Pancreas (tissue), 10 donors: ENCODE measurements at regions of chr2 and their contacts with region 1.

Region 1: DNA sequence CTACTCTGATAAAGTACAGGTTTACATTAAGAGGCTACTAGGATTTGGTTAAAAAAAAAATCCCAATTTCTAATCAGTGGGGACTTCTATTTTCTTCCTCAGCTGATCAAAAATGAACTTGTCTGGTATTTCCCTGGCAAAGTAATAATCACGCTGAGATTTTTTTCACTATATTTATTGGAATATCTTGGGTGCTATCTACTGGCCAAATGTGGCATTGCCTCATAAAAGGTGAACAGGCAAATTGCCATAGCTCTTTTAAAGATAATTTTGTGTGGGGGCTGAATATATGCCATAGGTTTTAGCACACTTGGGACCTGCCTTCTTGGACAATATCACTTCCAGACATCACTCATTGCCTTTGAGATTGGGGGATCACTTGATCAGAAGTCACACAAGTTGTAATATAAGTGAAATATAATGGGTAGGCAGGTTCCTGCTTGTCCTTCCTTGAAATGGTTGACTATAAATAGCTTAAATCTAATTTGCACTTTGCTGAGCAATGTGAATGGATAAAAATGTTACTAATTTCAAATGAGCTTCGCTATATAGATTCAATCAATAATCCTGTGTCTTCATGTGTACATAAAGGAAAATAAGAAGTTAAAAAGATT is 7.0 kb upstream of the NXPH2 start:
- DNase-seq: peak in 1 of 6 donors; percentile 34
- ATAC-seq: peak in 3 of 4 donors; percentile 71 to 85 (median 81)
- H3K4me3 ChIP-seq: no peak overlapping the region
- H3K27ac ChIP-seq: no peak overlapping the region
- H3K4me1 ChIP-seq: no peaks in the 10 kb centered on the region
- H3K27me3 ChIP-seq: no peaks in the 10 kb centered on the region
- CTCF ChIP-seq: peak; percentile 20 to 65 (median 43)

Region 2: GRCh38 chr2:137900421-137901141 is 886.6 kb before region 1 on chr2:
- intact Hi-C with region 1: loop called in 1 of 3 experiments (anchors 10 kb)
- DNase-seq: no peak
- ATAC-seq: no peak
- H3K4me3 ChIP-seq: no peak overlapping the region
- H3K27ac ChIP-seq: no peak overlapping the region
- H3K4me1 ChIP-seq: no peaks in the 10 kb centered on the region
- H3K27me3 ChIP-seq: no peaks in the 10 kb centered on the region
- CTCF ChIP-seq: no peak

Region 3: DNA sequence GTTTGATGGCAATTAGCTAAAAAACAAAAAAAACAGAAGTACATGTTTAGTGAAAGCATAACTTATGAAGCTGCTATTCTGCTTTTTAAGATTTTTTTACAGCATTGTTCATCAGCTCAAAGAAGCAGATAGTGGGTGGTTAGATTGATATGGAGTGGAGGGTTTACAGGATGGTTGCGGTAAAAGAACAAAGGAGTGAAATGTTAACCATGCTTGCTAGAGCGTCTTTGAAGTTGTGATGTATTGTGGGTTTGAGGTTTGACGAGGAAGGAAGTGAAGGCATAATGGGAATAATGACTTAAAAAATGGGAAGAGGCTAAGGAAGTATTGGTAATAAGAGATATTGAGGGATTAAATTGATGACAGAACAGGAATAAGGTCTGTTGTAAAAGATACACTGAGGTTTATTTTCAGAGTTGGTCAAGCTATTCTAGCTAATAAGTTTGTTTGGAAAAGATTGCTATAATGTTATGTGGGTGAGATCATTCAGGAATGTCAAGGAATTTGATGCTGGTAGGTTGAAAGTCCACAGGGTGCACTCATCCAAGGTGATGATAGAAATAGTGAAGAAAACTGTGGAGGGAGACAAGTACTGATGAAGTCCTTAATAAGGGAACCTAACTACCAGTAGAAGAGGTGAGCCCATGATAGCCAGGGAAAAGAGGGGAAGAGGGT is 271.0 kb before region 1 on chr2:
- intact Hi-C with region 1: no loop called
- DNase-seq: no peak
- ATAC-seq: peak; percentile 50 to 79 (median 61)
- H3K4me3 ChIP-seq: no peak overlapping the region
- H3K27ac ChIP-seq: no peak overlapping the region
- H3K4me1 ChIP-seq: peaks cover 0 to 19% (median 16%) of the 10 kb centered on the region in 3 donors
- H3K27me3 ChIP-seq: no peaks in the 10 kb centered on the region
- CTCF ChIP-seq: no peak

Region 4: GRCh38 chr2:138712212-138712979 is 74.8 kb before region 1 on chr2:
- intact Hi-C with region 1: no loop called
- DNase-seq: no peak
- ATAC-seq: peak in 1 of 4 donors; percentile 42
- H3K4me3 ChIP-seq: no peak overlapping the region
- H3K27ac ChIP-seq: no peak overlapping the region
- H3K4me1 ChIP-seq: no peaks in the 10 kb centered on the region
- H3K27me3 ChIP-seq: no peaks in the 10 kb centered on the region
- CTCF ChIP-seq: no peak

Region 5: DNA sequence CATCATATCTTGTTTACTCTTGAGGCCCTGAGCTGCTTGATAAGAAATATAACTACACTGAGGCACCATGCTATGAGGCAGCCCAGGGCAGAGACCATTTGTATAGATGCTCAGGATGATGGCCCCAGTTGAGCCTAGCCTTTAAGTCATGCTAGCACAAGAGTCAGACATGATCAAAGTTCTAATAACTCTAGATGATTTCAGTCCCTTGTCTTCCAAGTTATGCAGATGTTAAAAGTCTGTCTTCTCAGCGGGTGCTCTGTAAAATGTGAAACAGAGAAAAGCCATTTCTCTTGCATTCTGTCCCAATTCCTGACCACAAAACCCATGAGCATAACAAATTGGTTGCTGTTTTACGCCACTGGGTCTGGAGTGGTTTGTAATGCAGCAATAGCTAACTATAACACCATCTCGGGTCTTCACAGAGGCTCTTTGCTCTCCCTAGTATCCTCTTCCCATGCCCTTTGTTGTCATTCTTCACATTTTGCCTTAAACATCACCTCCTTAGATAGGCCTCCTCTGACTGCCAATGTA is 56.6 kb before region 1 on chr2:
- intact Hi-C with region 1: no loop called
- DNase-seq: no peak
- ATAC-seq: no peak
- H3K4me3 ChIP-seq: no peak overlapping the region
- H3K27ac ChIP-seq: no peak overlapping the region
- H3K4me1 ChIP-seq: peaks cover 0 to 2% (median 0%) of the 10 kb centered on the region in 3 donors
- H3K27me3 ChIP-seq: no peaks in the 10 kb centered on the region
- CTCF ChIP-seq: no peak

Region 6: GRCh38 chr2:139045524-139045923 is 258.4 kb after region 1 on chr2:
- intact Hi-C with region 1: no loop called
- DNase-seq: no peak
- ATAC-seq: no peak
- H3K4me3 ChIP-seq: no peak overlapping the region
- H3K27ac ChIP-seq: no peak overlapping the region
- H3K4me1 ChIP-seq: no peaks in the 10 kb centered on the region
- H3K27me3 ChIP-seq: no peaks in the 10 kb centered on the region
- CTCF ChIP-seq: no peak